HCT116 (cell line): ENCODE measurements at regions of chr3 and their contacts with region 1.

Region 1: DNA sequence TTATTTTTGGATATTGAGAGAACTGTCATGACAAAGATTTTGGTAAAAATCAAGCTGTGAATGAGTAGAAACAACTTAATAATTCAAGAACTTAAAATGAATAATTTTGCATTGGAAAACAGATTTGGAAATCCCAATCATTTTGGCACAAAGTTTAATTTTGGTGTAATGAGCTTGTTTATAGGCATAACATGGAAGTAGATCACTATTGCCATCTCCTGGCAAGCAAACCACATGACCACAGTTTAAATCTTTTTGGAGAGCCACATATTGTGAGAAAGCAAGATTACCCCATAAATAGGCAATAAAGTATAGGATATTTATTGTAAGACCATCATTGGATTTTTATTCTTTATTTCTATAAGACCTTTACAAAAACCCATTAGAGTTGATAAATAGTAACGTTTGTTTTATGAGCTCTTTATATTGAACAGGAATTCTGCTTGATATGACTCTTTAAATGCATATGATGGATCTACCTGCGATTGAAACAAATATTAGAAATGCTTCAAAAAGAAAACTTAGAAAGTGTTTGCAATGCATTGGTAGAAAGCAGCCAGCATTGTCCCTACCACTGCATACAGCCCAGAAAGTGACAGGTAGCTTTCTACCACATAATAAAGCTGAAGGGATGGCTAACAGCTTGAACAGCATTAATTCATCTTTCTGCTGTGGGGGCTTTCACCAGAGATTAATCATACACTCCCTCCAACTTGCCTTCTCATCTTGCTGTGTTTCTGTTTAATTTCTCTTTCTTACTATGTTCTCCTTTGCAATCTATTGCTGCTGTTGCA is 766.8 kb downstream of the TBL1XR1 start:
- DNase-seq: peak; percentile 34
- ATAC-seq: peak; percentile 71
- H3K4me3 ChIP-seq: no peak overlapping the region
- H3K27ac ChIP-seq: no peak overlapping the region
- H3K4me1 ChIP-seq: peaks cover 9 to 11% of the 10 kb centered on the region in 2 experiments; a peak in 3 of 4 replicates
- H3K27me3 ChIP-seq: no peaks in the 10 kb centered on the region
- CTCF ChIP-seq: peak; percentile 63 to 72 (median 65); a peak in 5 of 6 replicates
- POLR2A ChIP-seq: no peak
- RAD21 ChIP-seq: peak; percentile 84

Region 2: GRCh38 chr3:174862143-174862542 is 1568.3 kb before region 1 on chr3:
- CTCF ChIA-PET with region 1: interaction called, 7 read pairs
- POLR2A ChIA-PET with region 1: no interaction called
- RAD21 ChIA-PET with region 1: no interaction called
- intact Hi-C with region 1: loop called (anchors 1 kb)
- DNase-seq: peak; percentile 51
- ATAC-seq: peak; percentile 98
- H3K4me3 ChIP-seq: no peak overlapping the region
- H3K27ac ChIP-seq: no peak overlapping the region
- H3K4me1 ChIP-seq: peaks cover 18 to 36% of the 10 kb centered on the region in 2 experiments
- H3K27me3 ChIP-seq: no peaks in the 10 kb centered on the region
- CTCF ChIP-seq: peak; percentile 40 to 71 (median 61); a peak in 5 of 6 replicates
- POLR2A ChIP-seq: no peak
- RAD21 ChIP-seq: peak; percentile 81

Region 3: DNA sequence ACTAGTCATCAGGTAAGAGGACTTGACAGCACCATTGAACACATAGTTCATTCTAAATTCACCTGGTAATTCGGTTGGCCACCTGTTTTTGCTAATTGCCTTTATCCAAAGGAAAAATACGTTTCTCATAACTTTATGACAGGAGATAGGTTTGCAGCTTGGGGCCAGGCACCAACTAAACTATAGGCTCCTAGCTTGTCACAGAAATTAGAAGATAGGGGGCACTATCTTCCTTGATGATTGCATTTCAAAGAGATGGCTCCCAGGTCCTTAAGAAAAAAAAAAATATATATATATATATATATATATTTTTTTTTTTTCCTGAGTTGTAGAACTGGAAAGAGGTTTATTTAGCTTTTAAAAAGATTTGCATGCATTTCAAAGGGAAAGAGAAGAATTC is 1007.7 kb before region 1 on chr3:
- CTCF ChIA-PET with region 1: interaction called, 5 read pairs
- POLR2A ChIA-PET with region 1: no interaction called
- RAD21 ChIA-PET with region 1: no interaction called
- intact Hi-C with region 1: loop called (anchors 10 kb)
- DNase-seq: no peak
- ATAC-seq: peak; percentile 62; the same call in 1 of the 2 replicates
- H3K4me3 ChIP-seq: no peak overlapping the region
- H3K27ac ChIP-seq: no peak overlapping the region
- H3K4me1 ChIP-seq: no peaks in the 10 kb centered on the region
- H3K27me3 ChIP-seq: no peaks in the 10 kb centered on the region
- CTCF ChIP-seq: 0 out of 6 replicates have a peak, but pooled peaks of 2 of the 3 experiments have one; percentile 6 to 11
- POLR2A ChIP-seq: no peak
- RAD21 ChIP-seq: no peak

Region 4: DNA sequence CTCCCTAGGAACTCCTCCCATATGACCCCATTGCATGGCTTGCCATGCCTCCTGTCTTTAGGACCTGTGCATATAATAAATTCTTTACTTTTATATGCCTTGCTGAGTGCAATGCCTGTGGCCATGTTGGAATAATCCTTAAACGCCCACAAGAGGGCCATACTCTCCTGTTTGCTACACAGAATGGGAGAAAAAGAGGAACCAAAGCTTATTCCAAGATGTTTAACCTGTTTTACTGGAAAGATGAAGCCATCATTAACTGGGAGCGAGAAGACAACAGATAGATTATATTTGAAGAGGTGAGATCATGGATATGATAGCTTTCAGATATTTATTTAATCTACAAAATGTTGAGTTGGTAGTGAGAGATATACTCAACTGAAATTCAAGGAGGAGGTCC is 473.4 kb before region 1 on chr3:
- CTCF ChIA-PET with region 1: interaction called, 4 read pairs
- POLR2A ChIA-PET with region 1: no interaction called
- RAD21 ChIA-PET with region 1: no interaction called
- intact Hi-C with region 1: loop called (anchors 1 kb)
- DNase-seq: no peak
- ATAC-seq: peak; percentile 74
- H3K4me3 ChIP-seq: no peak overlapping the region
- H3K27ac ChIP-seq: no peak overlapping the region
- H3K4me1 ChIP-seq: no peaks in the 10 kb centered on the region
- H3K27me3 ChIP-seq: no peaks in the 10 kb centered on the region
- CTCF ChIP-seq: peak; percentile 23 to 58 (median 48); a peak in 5 of 6 replicates
- POLR2A ChIP-seq: no peak
- RAD21 ChIP-seq: peak; percentile 55

Region 5: GRCh38 chr3:176310641-176311040 is 119.8 kb before region 1 on chr3:
- CTCF ChIA-PET with region 1: no interaction called
- POLR2A ChIA-PET with region 1: no interaction called
- RAD21 ChIA-PET with region 1: no interaction called
- intact Hi-C with region 1: no loop called
- DNase-seq: no peak
- ATAC-seq: no peak
- H3K4me3 ChIP-seq: no peak overlapping the region
- H3K27ac ChIP-seq: no peak overlapping the region
- H3K4me1 ChIP-seq: no peaks in the 10 kb centered on the region
- H3K27me3 ChIP-seq: no peaks in the 10 kb centered on the region
- CTCF ChIP-seq: no peak
- POLR2A ChIP-seq: no peak
- RAD21 ChIP-seq: no peak